ENCODE measurements at regions of chr4 and their contacts with region 1.

Region 1: GRCh38 chr4:6538575-6538974 is 36.4 kb upstream of the MAN2B2 start:
- DNase-seq: no peak
- ATAC-seq: no peak

Region 2: DNA sequence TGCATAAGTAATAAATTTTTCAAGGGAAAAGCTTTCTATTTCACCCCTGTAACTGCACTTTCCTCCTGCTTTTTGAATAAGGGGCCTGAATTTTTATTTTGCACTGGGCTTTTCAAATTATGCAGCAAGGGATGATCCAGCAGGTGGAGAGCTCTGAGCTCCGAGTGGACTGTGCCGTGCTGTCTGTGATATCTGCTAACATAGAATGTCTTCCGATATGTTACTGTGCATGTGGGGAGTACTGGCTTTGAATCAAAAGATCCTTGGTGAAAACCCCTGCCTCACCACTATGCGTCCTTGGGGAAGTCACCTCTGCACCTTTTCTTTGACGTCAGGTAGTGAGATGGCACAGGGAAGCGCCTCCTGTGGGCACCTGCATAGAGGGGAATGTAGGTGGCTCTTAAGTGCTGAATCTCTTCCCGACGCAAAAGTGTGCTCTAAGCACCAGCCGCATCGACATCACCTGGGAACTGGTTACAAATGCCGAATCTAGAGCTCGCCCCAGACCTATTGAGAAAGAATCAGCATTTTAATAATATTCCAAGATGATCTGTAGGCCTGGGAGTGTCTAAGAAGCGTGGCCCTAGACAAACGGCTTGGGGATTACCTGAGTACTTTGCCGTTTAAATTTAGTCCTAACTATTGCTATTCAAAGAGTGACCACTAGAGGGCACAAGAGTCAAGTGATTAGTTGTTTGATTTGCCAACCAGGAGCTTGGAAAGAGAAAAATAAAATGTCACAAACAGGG is 288.2 kb before region 1 on chr4:
- intact Hi-C with region 1: loop called in 1 of 2 experiments (anchors 10 kb)
- DNase-seq: no peak
- ATAC-seq: peak in 1 of 2 donors; percentile 19